Natural killer cell (primary cell): ENCODE measurements at regions of chr11 and their contacts with region 1.

Region 1: DNA sequence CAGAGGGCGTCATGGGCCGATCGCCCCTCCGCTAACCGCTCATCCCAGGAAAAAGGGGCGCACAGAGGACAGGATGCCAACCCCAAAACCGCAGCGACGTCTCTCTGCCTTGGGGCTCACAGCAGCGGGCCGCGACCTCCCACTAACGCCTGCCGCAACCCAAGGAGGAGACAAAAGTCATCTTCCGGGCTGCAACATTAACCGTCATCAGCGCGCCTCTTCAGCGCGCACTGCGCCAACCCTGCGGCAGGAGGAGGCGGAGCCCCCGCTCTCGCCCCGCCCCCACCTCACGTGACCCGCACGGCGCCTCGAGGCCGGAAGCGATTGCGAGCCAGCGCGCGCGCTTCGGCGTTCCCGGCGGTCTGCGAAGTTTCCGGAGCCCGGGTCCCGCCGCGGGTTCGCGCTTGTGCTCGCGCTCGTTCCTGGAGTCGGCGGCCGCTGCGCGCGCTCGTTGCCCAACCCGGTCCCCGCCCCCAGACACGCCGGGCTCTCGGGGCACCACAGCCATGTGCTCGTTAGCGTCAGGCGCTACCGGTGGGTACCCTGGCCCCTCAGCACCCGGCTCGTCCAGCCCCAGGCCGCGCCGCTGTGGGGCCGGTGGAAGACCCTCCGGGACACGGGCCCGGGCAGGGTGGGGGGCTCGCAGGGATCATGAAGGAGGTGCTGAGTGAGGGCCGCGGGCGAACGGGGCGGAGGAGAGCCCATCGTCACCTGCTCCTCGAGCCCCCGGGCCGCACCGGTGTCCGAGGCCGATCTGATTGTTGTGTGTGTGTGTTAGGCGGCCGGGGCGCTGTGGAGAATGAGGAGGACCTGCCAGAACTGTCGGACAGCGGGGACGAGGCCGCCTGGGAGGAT is at the start of gene PRMT3:
- DNase-seq: peak; percentile 99
- ATAC-seq: peak; percentile 88 to 96 (median 90)
- H3K4me3 ChIP-seq: peak within 1 kb of the TSS; percentile 98
- H3K4me3 Mint-ChIP-seq: peak within 1 kb of the TSS; percentile 98
- H3K27ac ChIP-seq: peak within 1 kb of the TSS; percentile 98
- H3K27ac Mint-ChIP-seq: peak within 1 kb of the TSS; percentile 98 to 99
- H3K4me1 ChIP-seq: peaks cover 20% of the 10 kb centered on the region
- H3K4me1 Mint-ChIP-seq: peaks cover 20 to 23% of the 10 kb centered on the region in 2 donors
- H3K27me3 ChIP-seq: no peaks in the 10 kb centered on the region
- H3K27me3 Mint-ChIP-seq: no peaks in the 10 kb centered on the region
- CTCF ChIP-seq: peak; percentile 94
- total RNA-seq, gene PRMT3: 10.4 to 12.4 (median 12.1) TPM

Region 2: DNA sequence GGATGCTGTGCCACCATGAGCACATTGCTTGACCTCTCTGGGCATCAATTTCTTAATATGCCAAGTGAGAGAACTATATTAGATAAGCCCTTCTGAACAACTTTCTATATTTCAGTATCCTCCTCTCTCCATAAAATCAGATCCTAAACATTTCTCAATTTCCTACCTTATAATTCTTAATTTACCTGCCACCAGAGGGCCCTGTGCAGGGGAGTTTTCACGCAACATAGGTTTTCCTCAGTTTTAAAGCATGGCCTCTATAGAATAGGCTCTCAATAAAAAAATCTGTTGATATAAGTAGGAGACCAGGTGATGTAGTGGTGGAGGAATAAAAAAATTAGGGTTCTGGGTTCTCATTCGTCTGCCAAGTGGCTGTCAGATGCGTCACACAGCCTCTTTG is 143.5 kb before region 1 on chr11:
- intact Hi-C with region 1: no loop called
- DNase-seq: no peak
- ATAC-seq: no peak
- H3K4me3 ChIP-seq: no peak overlapping the region
- H3K4me3 Mint-ChIP-seq: no peak overlapping the region
- H3K27ac ChIP-seq: no peak overlapping the region
- H3K27ac Mint-ChIP-seq: no peak overlapping the region
- H3K4me1 ChIP-seq: no peaks in the 10 kb centered on the region
- H3K4me1 Mint-ChIP-seq: no peaks in the 10 kb centered on the region
- H3K27me3 ChIP-seq: no peaks in the 10 kb centered on the region
- H3K27me3 Mint-ChIP-seq: peaks cover 13 to 18% of the 10 kb centered on the region in 2 donors
- CTCF ChIP-seq: no peak

Region 3: GRCh38 chr11:20363500-20364411 is 23.7 kb before region 1 on chr11 and contains the start of gene HTATIP2:
- intact Hi-C with region 1: loop called (anchors 1 kb)
- DNase-seq: peak; percentile 70 to 87
- ATAC-seq: peak; percentile 95 to 97 (median 95)
- H3K4me3 ChIP-seq: peak within 1 kb of the TSS; percentile 65
- H3K4me3 Mint-ChIP-seq: peak within 1 kb of the TSS; percentile 84
- H3K27ac ChIP-seq: peak within 1 kb of the TSS; percentile 62
- H3K27ac Mint-ChIP-seq: peak within 1 kb of the TSS; percentile 67 to 82
- H3K4me1 ChIP-seq: peaks cover 28% of the 10 kb centered on the region
- H3K4me1 Mint-ChIP-seq: peaks cover 35 to 48% of the 10 kb centered on the region in 2 donors
- H3K27me3 ChIP-seq: no peaks in the 10 kb centered on the region
- H3K27me3 Mint-ChIP-seq: no peaks in the 10 kb centered on the region
- CTCF ChIP-seq: no peak
- total RNA-seq, gene HTATIP2: 16.7 to 25.6 (median 19.5) TPM